Endothelial cell of umbilical vein (primary cell): ENCODE measurements at regions of chr3 and their contacts with region 1.

Region 1: DNA sequence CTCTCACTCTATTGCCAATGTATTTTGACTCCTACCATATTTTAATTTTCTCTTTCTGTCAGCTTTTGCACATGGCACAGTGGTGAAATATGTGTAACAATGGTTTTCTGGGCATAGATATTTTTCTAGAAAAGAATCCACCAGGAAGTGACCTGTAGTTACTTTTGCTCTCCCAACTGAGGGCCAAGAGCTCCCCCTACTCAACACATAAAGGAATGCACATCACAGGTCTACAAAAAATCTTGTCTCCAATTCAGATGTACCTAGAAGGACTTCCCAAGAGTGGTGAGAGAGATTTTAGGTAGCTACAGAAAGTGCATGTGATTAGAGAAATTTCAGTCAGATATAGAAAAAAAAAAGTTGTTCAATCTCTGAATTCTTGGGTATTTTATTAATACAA is 15.6 kb downstream of the CPA3 start:
- DNase-seq: no peak
- H3K4me3 ChIP-seq: no peak overlapping the region
- H3K27ac ChIP-seq: peak overlapping the region; percentile 35
- H3K4me1 ChIP-seq: peaks cover 36% of the 10 kb centered on the region
- H3K27me3 ChIP-seq: no peaks in the 10 kb centered on the region
- CTCF ChIP-seq: no peak
- POLR2A ChIP-seq: no peak

Region 2: GRCh38 chr3:148861277-148861869 is 19.3 kb before region 1 on chr3:
- CTCF ChIA-PET with region 1: interaction called, 14 read pairs
- POLR2A ChIA-PET with region 1: no interaction called
- dilution Hi-C with region 1: no loop called
- intact Hi-C with region 1: loop called (anchors 1 kb)
- DNase-seq: peak; percentile 60
- H3K4me3 ChIP-seq: no peak overlapping the region
- H3K27ac ChIP-seq: no peak overlapping the region
- H3K4me1 ChIP-seq: no peaks in the 10 kb centered on the region
- H3K27me3 ChIP-seq: peaks cover 18 to 28% of the 10 kb centered on the region in 2 experiments
- CTCF ChIP-seq: peak; percentile 30 to 46
- POLR2A ChIP-seq: no peak

Region 3: DNA sequence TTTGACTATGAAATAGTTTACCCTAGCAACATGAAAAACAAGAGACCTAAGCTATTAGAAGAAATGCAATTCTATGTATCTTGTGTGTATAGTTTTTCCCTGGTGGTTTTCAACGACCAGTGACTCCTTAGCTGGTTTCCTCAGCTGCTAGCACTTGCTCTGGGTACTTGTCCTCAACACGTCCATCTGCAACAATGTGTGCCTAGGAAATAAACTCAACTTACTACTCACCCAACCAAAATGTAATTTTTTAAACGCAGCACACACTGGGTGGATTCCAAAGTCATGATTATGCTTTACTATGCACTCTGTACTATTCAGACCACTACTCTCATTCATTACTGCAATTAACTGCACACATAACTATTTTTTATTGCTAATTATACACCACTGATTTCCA is 15.4 kb after region 1 on chr3:
- CTCF ChIA-PET with region 1: interaction called, 10 read pairs
- POLR2A ChIA-PET with region 1: no interaction called
- dilution Hi-C with region 1: no loop called
- intact Hi-C with region 1: no loop called
- DNase-seq: no peak
- H3K4me3 ChIP-seq: no peak overlapping the region
- H3K27ac ChIP-seq: no peak overlapping the region
- H3K4me1 ChIP-seq: no peaks in the 10 kb centered on the region
- H3K27me3 ChIP-seq: peaks cover 8 to 31% of the 10 kb centered on the region in 2 experiments
- CTCF ChIP-seq: no peak
- POLR2A ChIP-seq: no peak

Region 4: DNA sequence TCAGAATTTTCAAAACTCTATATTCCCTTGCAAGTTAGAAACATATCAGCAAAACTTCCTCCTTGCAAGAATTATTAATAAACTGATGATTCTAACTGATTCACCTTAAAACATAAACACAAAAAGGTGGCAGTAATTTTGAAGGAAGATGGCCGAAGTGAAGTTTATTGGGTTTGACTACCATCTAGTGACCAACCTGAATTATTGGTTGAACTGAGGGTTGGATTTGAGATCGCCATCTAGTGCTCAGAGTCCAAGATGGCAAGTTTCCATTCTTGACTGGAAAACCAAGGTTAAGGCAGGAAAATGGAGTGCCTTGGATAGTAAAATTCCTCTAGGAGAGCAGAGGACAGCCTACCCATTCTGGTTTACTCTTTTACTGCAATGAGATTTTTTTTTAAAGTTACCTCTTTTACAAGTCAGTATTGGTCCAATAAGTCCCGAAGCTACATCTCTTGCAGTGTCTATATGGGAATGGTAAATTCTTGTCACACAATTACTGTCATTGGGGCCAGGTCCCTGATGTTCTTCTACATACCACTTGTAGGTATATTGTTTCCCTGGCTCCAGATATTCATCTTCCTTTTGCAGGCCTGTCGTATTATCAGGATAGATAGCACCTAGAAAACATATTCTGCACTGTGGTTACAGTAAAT is 392.5 kb after region 1 on chr3:
- CTCF ChIA-PET with region 1: no interaction called
- POLR2A ChIA-PET with region 1: no interaction called
- dilution Hi-C with region 1: no loop called
- intact Hi-C with region 1: no loop called
- DNase-seq: peak; percentile 86
- H3K4me3 ChIP-seq: no peak overlapping the region
- H3K27ac ChIP-seq: no peak overlapping the region
- H3K4me1 ChIP-seq: peaks cover 3% of the 10 kb centered on the region
- H3K27me3 ChIP-seq: no peaks in the 10 kb centered on the region
- CTCF ChIP-seq: peak; percentile 78 to 91
- POLR2A ChIP-seq: no peak